ENCODE measurements at regions of chr5 and their contacts with region 1.

Region 1: DNA sequence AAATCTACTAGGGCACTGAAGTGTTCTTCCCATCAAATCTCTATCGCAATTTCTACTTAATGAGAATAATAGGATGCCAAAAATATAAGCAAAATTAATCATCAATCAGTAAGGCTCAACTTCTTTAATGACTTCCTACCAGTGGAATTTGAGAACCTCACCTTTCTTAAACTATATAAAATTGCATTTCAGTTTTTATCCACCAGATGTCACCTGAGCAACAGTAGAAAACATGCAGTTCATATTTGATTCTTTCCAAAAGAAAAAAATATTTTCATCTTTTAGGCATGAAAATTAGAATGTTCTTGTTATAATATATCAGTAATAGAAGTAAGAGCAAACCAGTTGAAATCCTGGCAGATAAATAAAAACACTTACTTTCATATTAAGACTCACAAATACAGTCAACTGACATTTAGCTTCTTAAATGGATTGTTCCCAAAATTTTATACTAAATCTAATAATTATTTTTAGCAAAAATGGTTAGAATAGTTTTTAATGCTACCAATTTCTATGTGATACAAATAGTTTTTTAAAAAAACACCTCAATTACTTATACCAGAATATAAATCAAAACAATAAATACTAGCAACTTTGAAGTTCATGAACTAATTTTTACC is 13.4 kb upstream of the CCDC112 start:
- DNase-seq: no peak
- H3K4me3 Mint-ChIP-seq: no peak overlapping the region
- H3K27ac Mint-ChIP-seq: no peak overlapping the region
- H3K4me1 Mint-ChIP-seq: no peaks in the 10 kb centered on the region
- H3K27me3 Mint-ChIP-seq: peaks cover 32% of the 10 kb centered on the region

Region 2: GRCh38 chr5:115579747-115580173 is 269.9 kb after region 1 on chr5:
- intact Hi-C with region 1: loop called (anchors 1 kb)
- DNase-seq: no peak
- H3K4me3 Mint-ChIP-seq: no peak overlapping the region
- H3K27ac Mint-ChIP-seq: no peak overlapping the region
- H3K4me1 Mint-ChIP-seq: no peaks in the 10 kb centered on the region
- H3K27me3 Mint-ChIP-seq: no peaks in the 10 kb centered on the region

Region 3: GRCh38 chr5:116068028-116068632 is 758.3 kb after region 1 on chr5:
- intact Hi-C with region 1: loop called (anchors 5 kb)
- DNase-seq: peak; percentile 9
- H3K4me3 Mint-ChIP-seq: no peak overlapping the region
- H3K27ac Mint-ChIP-seq: no peak overlapping the region
- H3K4me1 Mint-ChIP-seq: no peaks in the 10 kb centered on the region
- H3K27me3 Mint-ChIP-seq: peaks cover 43% of the 10 kb centered on the region